ENCODE measurements at regions of chr7 and their contacts with region 1.

Region 1: DNA sequence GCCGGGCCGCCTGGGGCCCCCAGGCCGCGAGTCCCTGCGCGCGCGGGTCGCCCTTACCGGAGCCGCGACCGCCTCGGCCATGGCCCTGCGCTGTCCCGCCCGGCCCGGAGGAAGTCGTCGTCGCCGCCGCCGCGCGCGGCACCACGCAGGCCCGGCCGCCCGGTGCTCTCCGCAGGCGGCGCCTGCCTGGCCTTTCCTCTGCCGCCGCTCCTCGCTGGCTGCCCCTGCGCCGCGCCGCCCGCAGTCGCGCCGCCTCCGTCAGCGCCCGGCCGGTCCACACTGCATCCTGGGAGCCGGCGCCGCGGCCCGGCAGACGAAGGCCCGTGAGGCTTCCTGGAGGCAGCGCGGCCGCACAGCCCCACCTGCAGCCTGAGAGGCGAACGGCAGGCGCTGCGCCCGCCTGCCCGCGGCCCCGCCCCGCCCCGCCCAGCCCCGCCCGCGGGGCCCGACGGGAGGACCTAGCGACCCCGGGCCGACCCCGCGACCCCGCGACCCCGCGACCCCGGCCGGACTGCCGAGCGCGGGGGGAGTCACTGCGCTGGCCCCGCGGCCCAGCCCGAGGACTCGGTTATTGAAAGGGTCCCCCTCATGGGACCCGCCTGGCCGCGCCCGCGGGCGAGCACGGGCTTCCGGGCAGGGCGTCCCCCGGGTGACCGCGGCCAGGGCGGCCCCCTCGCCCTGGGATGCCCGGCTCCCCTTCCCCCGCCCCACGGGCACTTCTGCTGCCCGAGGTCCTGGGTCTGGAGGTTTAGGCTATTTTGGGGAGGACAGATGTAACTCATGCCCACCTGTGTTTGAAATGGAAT is at the start of gene ZNF746:
- DNase-seq: peak; percentile 89
- ATAC-seq: peak; percentile 96
- H3K4me3 ChIP-seq: peak within 1 kb of the TSS; percentile 27 to 87 (median 60)
- H3K4me3 Mint-ChIP-seq: peak within 1 kb of the TSS; percentile 93
- H3K27ac ChIP-seq: peak within 1 kb of the TSS in 1 of 2 donors; percentile 78
- H3K27ac Mint-ChIP-seq: peak within 1 kb of the TSS; percentile 92
- H3K4me1 ChIP-seq: peaks cover 12 to 19% of the 10 kb centered on the region in 2 donors
- H3K4me1 Mint-ChIP-seq: peaks cover 23% of the 10 kb centered on the region
- H3K27me3 ChIP-seq: no peaks in the 10 kb centered on the region
- H3K27me3 Mint-ChIP-seq: no peaks in the 10 kb centered on the region
- CTCF ChIP-seq: peak; percentile 43
- total RNA-seq, gene ZNF746: 30.4 and 32.2 TPM in 2 replicates

Region 2: GRCh38 chr7:149195180-149196150 is 302.2 kb before region 1 on chr7 and contains the start of gene ZNF282:
- CTCF ChIA-PET with region 1: no interaction called
- POLR2A ChIA-PET with region 1: no interaction called
- intact Hi-C with region 1: loop called (anchors 1 kb)
- DNase-seq: peak; percentile 81
- ATAC-seq: peak; percentile 84
- H3K4me3 ChIP-seq: peak within 1 kb of the TSS; percentile 60 to 92 (median 83)
- H3K4me3 Mint-ChIP-seq: peak within 1 kb of the TSS; percentile 89
- H3K27ac ChIP-seq: peak within 1 kb of the TSS; percentile 47 to 76
- H3K27ac Mint-ChIP-seq: peak within 1 kb of the TSS; percentile 81
- H3K4me1 ChIP-seq: peaks cover 14 to 18% of the 10 kb centered on the region in 2 donors
- H3K4me1 Mint-ChIP-seq: peaks cover 38% of the 10 kb centered on the region
- H3K27me3 ChIP-seq: no peaks in the 10 kb centered on the region
- H3K27me3 Mint-ChIP-seq: no peaks in the 10 kb centered on the region
- CTCF ChIP-seq: peak; percentile 58
- total RNA-seq, gene ZNF282: 25.7 and 26.8 TPM in 2 replicates

Region 3: DNA sequence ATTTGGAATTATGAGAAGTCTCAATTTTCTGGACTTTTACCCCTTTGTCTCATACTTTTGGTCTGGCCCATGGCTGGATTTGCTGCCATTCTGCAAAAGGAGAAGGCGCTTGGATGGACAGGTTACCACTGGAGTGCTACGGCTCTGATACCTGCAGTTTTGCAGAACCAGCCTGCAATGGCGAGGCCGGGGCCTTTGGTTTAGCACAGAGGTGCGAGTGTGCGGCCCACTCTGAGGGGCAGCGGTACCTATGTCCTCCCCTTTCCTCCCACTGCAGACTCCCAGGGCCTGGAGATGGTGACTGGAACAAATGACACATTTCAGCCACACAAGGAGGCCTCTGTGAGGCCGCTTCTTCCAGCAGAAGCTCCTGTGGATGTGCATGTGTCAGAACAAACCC is 48.7 kb before region 1 on chr7:
- CTCF ChIA-PET with region 1: no interaction called
- POLR2A ChIA-PET with region 1: no interaction called
- intact Hi-C with region 1: no loop called
- DNase-seq: no peak
- ATAC-seq: no peak
- H3K4me3 ChIP-seq: no peak overlapping the region
- H3K4me3 Mint-ChIP-seq: no peak overlapping the region
- H3K27ac ChIP-seq: no peak overlapping the region
- H3K27ac Mint-ChIP-seq: no peak overlapping the region
- H3K4me1 ChIP-seq: no peaks in the 10 kb centered on the region
- H3K4me1 Mint-ChIP-seq: no peaks in the 10 kb centered on the region
- H3K27me3 ChIP-seq: no peaks in the 10 kb centered on the region
- H3K27me3 Mint-ChIP-seq: no peaks in the 10 kb centered on the region
- CTCF ChIP-seq: no peak

Region 4: GRCh38 chr7:149460493-149461277 is 37.0 kb before region 1 on chr7 and contains the start of gene ZNF777:
- CTCF ChIA-PET with region 1: interaction called, 3 read pairs
- POLR2A ChIA-PET with region 1: no interaction called
- intact Hi-C with region 1: loop called (anchors 2 kb)
- DNase-seq: peak; percentile 87
- ATAC-seq: peak; percentile 97
- H3K4me3 ChIP-seq: peak within 1 kb of the TSS; percentile 25 to 94 (median 70)
- H3K4me3 Mint-ChIP-seq: peak within 1 kb of the TSS; percentile 92
- H3K27ac ChIP-seq: peak within 1 kb of the TSS in 1 of 2 donors; percentile 65
- H3K27ac Mint-ChIP-seq: peak within 1 kb of the TSS; percentile 89
- H3K4me1 ChIP-seq: peaks cover 14% of the 10 kb centered on the region in 2 donors
- H3K4me1 Mint-ChIP-seq: peaks cover 31% of the 10 kb centered on the region
- H3K27me3 ChIP-seq: peaks cover 0 to 11% (median 2%) of the 10 kb centered on the region in 4 experiments
- H3K27me3 Mint-ChIP-seq: peaks cover 14% of the 10 kb centered on the region
- CTCF ChIP-seq: peak; percentile 43
- total RNA-seq, gene ZNF777: 14.9 and 16.0 TPM in 2 replicates

Region 5: DNA sequence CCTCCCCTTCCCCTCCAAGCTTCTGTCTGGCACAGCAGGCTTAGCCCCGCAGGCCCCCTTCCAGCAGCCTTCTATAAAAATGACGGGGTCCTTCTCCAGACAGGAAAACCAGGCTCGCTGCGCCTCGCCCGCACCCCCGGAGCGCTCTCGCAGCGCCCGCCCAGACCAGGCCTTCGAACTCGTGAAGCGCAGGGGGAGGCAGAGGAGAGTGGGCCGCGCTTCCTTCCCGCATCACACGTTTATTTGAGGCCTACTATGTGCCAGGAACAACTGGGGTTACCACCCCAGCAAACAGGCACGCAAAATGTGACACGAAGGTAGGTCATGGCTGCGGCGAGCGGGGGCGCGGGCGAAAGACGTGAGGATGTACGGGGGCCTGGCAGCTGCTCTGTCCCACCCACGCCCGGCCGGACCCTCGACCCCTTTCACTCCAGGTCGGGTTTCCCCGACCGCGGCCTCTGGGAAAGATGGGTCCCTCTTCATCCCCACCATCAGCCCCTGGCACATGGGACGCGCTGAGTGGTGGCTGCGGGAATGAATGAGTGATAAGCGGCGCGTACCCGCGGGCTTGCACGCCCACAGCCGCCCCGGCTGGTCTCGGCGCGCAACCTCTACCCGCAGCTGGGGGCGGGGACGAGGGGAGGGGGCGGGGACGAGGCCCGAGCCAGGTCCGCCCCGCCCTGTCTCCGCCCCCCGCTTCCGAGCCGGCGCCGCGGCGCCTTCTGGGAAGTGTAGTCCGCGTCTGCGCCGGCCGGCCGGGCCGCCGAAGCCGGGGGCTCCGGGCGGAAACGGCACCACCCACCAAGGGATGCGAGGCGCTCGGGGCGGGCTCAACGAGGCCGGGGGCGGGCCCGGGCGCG is 216.6 kb after region 1 on chr7:
- CTCF ChIA-PET with region 1: no interaction called
- POLR2A ChIA-PET with region 1: no interaction called
- intact Hi-C with region 1: loop called (anchors 2 kb)
- DNase-seq: peak; percentile 94
- ATAC-seq: peak; percentile 93
- H3K4me3 ChIP-seq: peak overlapping the region in 4 of 5 experiments; percentile 62 to 83 (median 68)
- H3K4me3 Mint-ChIP-seq: peak overlapping the region; percentile 87
- H3K27ac ChIP-seq: no peak overlapping the region
- H3K27ac Mint-ChIP-seq: peak overlapping the region; percentile 78
- H3K4me1 ChIP-seq: peaks cover 10 to 21% of the 10 kb centered on the region in 2 donors
- H3K4me1 Mint-ChIP-seq: peaks cover 22% of the 10 kb centered on the region
- H3K27me3 ChIP-seq: no peaks in the 10 kb centered on the region
- H3K27me3 Mint-ChIP-seq: no peaks in the 10 kb centered on the region
- CTCF ChIP-seq: no peak